A549 (cell line): ENCODE measurements at regions of chr6 and their contacts with region 1.

Region 1: DNA sequence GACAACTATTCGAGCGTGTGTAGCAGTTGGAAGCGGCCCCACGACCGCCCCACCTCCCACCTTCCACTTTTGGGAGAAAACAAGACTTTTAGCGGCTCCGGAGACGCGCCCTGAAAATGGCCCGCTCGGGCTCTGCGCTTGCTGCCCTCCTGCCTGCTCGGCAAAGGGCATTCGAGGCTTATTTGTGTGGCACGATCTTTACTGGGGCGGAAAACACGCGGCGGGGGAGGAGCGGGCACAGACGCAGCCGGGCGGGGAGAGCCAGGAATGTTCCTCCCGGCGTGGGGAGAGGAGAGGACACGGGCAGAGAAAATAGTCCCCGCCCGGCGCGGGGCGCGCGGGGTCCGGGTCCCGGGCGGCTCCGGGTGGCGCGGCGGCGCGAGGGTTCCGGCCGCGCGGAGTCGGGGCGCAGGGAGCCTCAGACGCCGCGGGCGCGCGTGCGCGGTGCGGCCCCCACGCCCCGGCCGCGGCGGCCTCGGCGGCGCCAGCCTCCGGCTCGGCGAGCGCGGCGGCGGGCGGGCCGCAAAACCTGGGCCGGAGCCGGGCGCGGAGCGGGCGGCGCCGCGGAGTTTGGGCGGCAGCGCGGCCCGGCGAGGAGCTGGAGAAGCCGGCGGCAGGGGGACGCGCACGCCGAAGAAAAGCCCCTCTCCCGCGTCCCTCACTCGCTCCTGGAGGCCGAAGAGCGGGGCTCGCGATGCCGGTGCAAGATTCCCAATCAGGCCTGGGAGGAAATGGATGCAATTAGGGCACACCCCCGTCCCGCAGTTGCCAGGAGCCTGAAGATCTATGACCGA is 90.0 kb upstream of the ARID1B start:
- DNase-seq: peak; percentile 56 to 83
- ATAC-seq: peak; percentile 86 to 92
- H3K4me3 ChIP-seq: peak overlapping the region; percentile 92
- H3K27ac ChIP-seq: peak overlapping the region; percentile 98 to 100
- H3K4me1 ChIP-seq: peaks cover 10% of the 10 kb centered on the region
- CTCF ChIP-seq: no peak
- EP300 ChIP-seq: no peak
- POLR2A ChIP-seq: peak; percentile 48
- RAD21 ChIP-seq: peak in 1 of 2 experiments; percentile 11; a peak in 1 of 5 replicates

Region 2: DNA sequence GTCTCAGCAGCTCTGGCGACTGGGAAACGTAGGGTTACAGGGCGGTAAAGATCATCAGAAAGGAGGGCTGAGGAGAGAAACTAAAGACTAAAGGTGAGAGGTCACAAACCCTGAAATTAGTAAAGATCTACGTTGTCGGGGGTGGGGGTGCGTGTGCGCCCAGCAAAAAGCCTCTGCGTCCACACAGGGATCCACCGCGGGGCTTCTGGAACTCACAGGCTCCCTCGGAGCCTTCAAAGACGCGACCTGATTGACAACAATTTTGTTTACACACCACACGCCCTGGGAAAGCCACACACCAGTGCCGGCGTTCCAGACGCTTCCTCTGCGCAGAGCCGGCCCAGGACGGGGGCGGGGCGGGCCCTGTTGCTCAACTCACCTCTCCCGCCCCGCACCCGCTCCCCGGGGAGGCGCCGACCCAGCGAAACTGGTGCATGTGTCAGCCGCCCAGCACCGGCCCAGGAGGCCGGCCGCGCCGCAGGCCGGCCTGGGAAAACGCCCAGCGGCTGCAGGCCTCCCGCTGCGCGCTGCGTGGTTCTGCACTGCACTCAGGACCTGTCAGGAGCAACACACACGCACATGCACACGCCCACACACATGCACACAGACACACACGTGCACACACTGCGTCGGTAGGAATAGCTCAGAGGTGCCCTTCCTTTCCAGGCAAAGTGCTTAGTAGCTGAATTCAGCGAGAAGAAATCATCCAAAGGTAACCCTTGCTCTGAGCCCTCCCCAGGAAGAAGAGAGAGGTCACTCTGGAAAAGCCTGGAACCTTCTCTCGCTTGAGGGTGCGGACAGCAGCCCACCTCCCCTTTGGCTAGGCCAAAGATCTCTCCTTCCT is 32.8 kb after region 1 on chr6:
- CTCF ChIA-PET with region 1: interaction called, 3 read pairs
- POLR2A ChIA-PET with region 1: interaction called, 18 read pairs
- DNase-seq: peak; percentile 43 to 95
- ATAC-seq: peak; percentile 93 to 95
- H3K4me3 ChIP-seq: peak overlapping the region; percentile 30
- H3K27ac ChIP-seq: peak overlapping the region; percentile 89 to 95
- H3K4me1 ChIP-seq: peaks cover 33% of the 10 kb centered on the region
- CTCF ChIP-seq: no peak
- EP300 ChIP-seq: peak; percentile 41 to 79; a peak in 3 of 5 replicates
- POLR2A ChIP-seq: 0 out of 2 replicates have a peak, but pooled peaks have one; percentile 34
- RAD21 ChIP-seq: peak; percentile 7 to 38; a peak in 3 of 5 replicates